Naive thymus-derived CD8-positive, alpha-beta T cell (primary cell): ENCODE measurements at regions of chr21 and their contacts with region 1.

Region 1: GRCh38 chr21:44083631-44084291 is 23.4 kb upstream of the PWP2 start:
- DNase-seq: peak; percentile 46 to 91 (median 82)
- ATAC-seq: peak; percentile 84 to 92
- H3K4me3 Mint-ChIP-seq: peak overlapping the region; percentile 67 to 88 (median 78)
- H3K27ac Mint-ChIP-seq: peak overlapping the region; percentile 90 to 99 (median 97)
- H3K4me1 Mint-ChIP-seq: peaks cover 39 to 96% (median 89%) of the 10 kb centered on the region in 4 donors
- H3K27me3 Mint-ChIP-seq: no peaks in the 10 kb centered on the region

Region 2: GRCh38 chr21:43923391-43923790 is 160.4 kb before region 1 on chr21:
- POLR2A ChIA-PET with region 1: no interaction called
- DNase-seq: peak in 1 of 10 donors; percentile 26
- ATAC-seq: no peak
- H3K4me3 Mint-ChIP-seq: no peak overlapping the region
- H3K27ac Mint-ChIP-seq: peak overlapping the region; percentile 78 to 99 (median 96)
- H3K4me1 Mint-ChIP-seq: peaks cover 34 to 70% (median 44%) of the 10 kb centered on the region in 4 donors
- H3K27me3 Mint-ChIP-seq: no peaks in the 10 kb centered on the region

Region 3: DNA sequence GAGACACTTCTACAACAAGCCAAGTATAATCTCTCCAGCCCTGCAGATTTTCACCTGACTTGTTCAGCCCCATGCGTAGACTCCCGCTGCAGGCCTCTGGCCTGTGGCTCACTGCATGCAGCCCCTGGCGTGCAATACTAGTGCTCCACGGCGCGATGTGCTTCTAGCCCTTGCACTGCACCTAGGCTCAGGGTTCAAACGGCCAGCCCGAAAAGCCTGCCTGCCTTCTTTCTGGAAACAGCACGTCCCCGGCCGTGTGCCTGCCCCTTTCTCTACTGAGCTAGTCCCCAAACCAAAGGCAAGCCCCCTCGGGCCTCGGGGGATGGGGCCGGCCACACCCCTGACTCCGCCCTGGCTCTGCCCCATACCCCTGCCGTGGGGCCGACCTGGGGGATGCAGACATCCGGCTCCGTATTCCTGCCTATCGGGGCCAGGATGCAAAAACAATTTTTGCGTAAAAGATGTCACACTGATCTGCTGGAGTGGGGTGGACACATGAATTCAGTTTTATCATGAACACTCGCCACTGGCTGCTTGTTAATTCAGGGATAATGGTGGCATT is 98.0 kb before region 1 on chr21:
- POLR2A ChIA-PET with region 1: no interaction called
- DNase-seq: no peak
- ATAC-seq: peak; percentile 41 to 60
- H3K4me3 Mint-ChIP-seq: peak overlapping the region in 7 of 10 donors; percentile 3 to 58 (median 30)
- H3K27ac Mint-ChIP-seq: peak overlapping the region; percentile 58 to 92 (median 76)
- H3K4me1 Mint-ChIP-seq: peaks cover 16 to 25% (median 18%) of the 10 kb centered on the region in 4 donors
- H3K27me3 Mint-ChIP-seq: no peaks in the 10 kb centered on the region

Region 4: DNA sequence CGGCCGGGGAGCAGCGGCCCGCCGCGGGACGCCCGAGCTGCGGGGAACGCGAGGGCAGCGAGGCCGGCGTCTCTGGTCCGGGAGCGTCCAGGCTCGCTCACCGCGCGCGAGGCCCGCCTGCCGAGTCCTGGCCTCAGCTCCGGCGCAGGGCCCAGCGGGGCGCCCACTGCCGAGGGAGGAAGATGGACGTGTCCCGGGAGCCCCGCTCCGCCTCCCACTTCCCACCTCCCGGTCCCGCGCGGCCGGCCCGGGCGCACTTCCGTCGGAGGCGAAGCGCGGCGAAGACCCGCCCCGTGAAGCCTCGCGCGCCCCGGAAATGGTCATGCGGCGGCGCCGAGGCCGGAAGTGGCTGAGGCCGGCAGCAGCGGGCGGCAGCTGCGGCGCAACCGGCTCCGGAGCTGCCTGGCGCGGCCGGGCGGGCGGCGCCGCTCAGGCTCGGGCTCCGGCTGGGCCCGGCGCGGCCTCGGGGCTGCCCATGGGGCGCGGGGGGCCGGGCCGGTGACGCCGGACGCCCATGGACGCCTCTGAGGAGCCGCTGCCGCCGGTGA is 71.7 kb before region 1 on chr21 and contains the start of gene TRAPPC10:
- POLR2A ChIA-PET with region 1: interaction called, 14 read pairs
- DNase-seq: peak; percentile 59 to 84 (median 76)
- ATAC-seq: peak; percentile 62 to 63
- H3K4me3 Mint-ChIP-seq: peak within 1 kb of the TSS; percentile 83 to 96 (median 91)
- H3K27ac Mint-ChIP-seq: peak within 1 kb of the TSS; percentile 89 to 98 (median 94)
- H3K4me1 Mint-ChIP-seq: peaks cover 22 to 58% (median 53%) of the 10 kb centered on the region in 4 donors
- H3K27me3 Mint-ChIP-seq: no peaks in the 10 kb centered on the region
- polyA plus RNA-seq, gene TRAPPC10: 17.7 to 33.1 (median 22.8) TPM

Region 5: DNA sequence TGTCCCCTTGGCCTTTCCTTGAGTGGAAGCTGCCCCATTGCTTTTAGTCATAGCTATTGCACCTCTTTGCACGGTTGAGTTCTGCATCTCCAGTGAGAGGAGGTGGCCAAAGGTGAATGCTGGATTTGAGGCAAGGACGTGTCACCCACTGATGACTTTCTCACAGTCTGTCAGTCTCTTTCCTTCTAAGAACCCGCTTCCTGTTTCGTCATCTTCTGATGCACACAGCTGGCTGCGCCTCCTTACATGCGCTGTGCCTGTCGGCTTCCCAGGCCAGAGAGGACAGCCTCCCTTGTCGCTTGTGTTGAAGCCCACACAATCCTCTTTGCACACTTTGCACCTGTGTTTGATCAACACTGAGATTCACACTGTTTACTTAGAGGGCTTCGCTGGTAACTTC is 18.3 kb before region 1 on chr21:
- POLR2A ChIA-PET with region 1: interaction called, 27 read pairs
- DNase-seq: peak; percentile 58 to 93 (median 82)
- ATAC-seq: peak; percentile 92 to 97
- H3K4me3 Mint-ChIP-seq: peak overlapping the region; percentile 56 to 81 (median 74)
- H3K27ac Mint-ChIP-seq: peak overlapping the region; percentile 81 to 99 (median 98)
- H3K4me1 Mint-ChIP-seq: peaks cover 26 to 48% (median 43%) of the 10 kb centered on the region in 4 donors
- H3K27me3 Mint-ChIP-seq: no peaks in the 10 kb centered on the region